Endothelial cell of umbilical vein (primary cell): ENCODE measurements at regions of chr17 and their contacts with region 1.

Region 1: DNA sequence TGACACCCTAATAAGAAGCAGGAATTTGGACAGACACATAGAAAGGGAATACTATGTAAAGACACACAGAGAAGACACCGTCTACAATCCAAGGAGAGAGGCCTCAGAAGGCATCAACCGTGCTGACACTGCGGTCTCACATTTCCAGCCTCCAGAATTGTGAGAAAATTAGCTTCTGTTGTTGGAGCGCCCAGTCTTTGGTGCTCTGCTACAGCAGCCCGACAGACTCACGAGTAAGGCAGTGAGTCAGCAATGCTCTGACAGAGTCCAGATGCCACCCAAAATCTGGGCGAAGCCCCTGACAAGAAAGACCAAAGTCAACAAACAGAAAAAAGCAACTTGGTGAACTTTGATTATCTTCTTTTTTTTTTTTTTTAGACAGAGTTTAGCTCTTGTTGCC is 32.5 kb upstream of the RAI1 start:
- DNase-seq: no peak
- H3K4me3 ChIP-seq: no peak overlapping the region
- H3K27ac ChIP-seq: no peak overlapping the region
- H3K4me1 ChIP-seq: no peaks in the 10 kb centered on the region
- H3K27me3 ChIP-seq: peaks cover 3 to 4% of the 10 kb centered on the region in 2 experiments
- CTCF ChIP-seq: no peak
- POLR2A ChIP-seq: no peak

Region 2: DNA sequence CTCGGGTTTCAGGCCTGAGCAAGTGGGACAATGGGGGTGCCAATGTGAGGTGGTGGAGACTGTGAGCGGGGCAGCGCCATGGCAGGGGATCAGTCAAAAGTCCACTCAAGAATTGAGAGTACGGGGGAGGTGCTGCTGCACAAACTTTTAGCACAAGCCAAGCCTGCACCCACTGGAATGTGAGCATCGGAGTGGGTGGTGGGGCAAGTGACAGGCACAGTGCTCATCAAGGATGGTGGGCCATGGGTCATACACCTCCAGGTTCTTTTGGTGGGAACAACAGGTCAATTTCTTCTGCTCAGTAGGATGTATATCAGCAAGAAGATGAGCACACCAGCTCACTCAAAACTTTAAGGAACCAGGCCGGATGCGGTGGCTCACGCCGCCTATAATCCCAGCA is 24.9 kb before region 1 on chr17:
- CTCF ChIA-PET with region 1: no interaction called
- POLR2A ChIA-PET with region 1: interaction called, 10 read pairs
- dilution Hi-C with region 1: no loop called
- intact Hi-C with region 1: no loop called
- DNase-seq: no peak
- H3K4me3 ChIP-seq: no peak overlapping the region
- H3K27ac ChIP-seq: no peak overlapping the region
- H3K4me1 ChIP-seq: no peaks in the 10 kb centered on the region
- H3K27me3 ChIP-seq: peaks cover 0 to 4% of the 10 kb centered on the region in 2 experiments
- CTCF ChIP-seq: no peak
- POLR2A ChIP-seq: no peak

Region 3: GRCh38 chr17:17712268-17712924 is 63.6 kb after region 1 on chr17:
- CTCF ChIA-PET with region 1: no interaction called
- POLR2A ChIA-PET with region 1: no interaction called
- dilution Hi-C with region 1: no loop called
- intact Hi-C with region 1: no loop called
- DNase-seq: peak; percentile 94
- H3K4me3 ChIP-seq: no peak overlapping the region
- H3K27ac ChIP-seq: peak overlapping the region; percentile 98
- H3K4me1 ChIP-seq: peaks cover 33% of the 10 kb centered on the region
- H3K27me3 ChIP-seq: no peaks in the 10 kb centered on the region
- CTCF ChIP-seq: no peak
- POLR2A ChIP-seq: no peak